H1 (cell line): ENCODE measurements at regions of chr7 and their contacts with region 1.

Region 1: DNA sequence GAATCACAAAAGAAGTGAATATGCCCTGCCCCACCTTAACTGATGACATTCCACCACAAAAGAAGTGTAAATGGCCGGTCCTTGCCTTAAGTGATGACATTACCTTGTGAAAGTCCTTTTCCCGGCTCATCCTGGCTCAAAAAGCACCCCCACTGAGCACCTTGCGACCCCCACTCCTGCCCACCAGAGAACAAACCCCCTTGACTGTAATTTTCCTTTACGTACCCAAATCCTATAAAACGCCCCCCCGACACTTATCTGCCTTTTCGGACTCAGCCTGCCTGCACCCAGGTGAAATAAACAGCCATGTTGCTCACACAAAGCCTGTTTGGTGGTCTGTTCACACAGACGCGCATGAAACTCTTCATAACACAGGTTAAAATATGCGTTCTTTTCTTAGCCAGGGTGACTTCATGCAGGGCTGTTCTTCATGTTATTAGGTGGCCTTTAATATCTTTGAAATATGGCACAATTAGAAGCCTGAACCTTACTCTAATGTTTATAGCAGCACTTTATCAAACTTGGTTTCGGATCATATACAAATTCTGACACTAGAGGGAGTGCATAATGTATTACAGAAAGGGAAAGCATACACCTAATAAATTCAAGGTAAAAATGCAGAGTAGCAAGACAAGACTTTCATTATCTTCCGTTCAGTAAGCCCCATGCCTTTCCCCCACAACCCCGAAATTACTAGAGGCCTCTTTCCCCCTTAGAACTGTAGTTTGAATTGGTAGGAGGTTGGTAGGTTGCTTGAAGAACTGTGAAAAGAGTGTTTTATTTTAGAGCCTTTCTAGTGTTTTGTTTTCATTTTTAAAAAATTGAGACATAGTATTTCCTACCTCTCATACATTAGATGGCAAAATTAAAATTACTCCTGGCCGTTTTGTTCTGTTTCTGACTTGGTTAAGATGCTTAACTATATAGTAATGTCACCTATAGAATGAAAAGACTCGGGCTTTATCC is 117.9 kb downstream of the NPY start:
- DNase-seq: no peak
- H3K4me3 ChIP-seq: peak overlapping the region; percentile 3 to 66 (median 56)
- H3K27ac ChIP-seq: no peak overlapping the region
- H3K4me1 ChIP-seq: peaks cover 2 to 28% (median 19%) of the 10 kb centered on the region in 4 experiments; a peak in 6 of 7 replicates
- H3K27me3 ChIP-seq: no peaks in the 10 kb centered on the region
- CTCF ChIP-seq: peak in 1 of 3 experiments; percentile 27; a peak in 1 of 4 replicates
- EP300 ChIP-seq: no peak
- POLR2A ChIP-seq: peak; percentile 16 to 38; a peak in 2 of 3 replicates
- RAD21 ChIP-seq: no peak; a peak in 1 of 4 replicates

Region 2: GRCh38 chr7:24135003-24135817 is 266.7 kb before region 1 on chr7:
- CTCF ChIA-PET with region 1: no interaction called
- POLR2A ChIA-PET with region 1: no interaction called
- DNase-seq: no peak
- H3K4me3 ChIP-seq: no peak overlapping the region
- H3K27ac ChIP-seq: no peak overlapping the region
- H3K4me1 ChIP-seq: no peaks in the 10 kb centered on the region
- H3K27me3 ChIP-seq: no peaks in the 10 kb centered on the region
- CTCF ChIP-seq: no peak
- EP300 ChIP-seq: no peak
- POLR2A ChIP-seq: no peak
- RAD21 ChIP-seq: no peak

Region 3: GRCh38 chr7:24290004-24290641 is 111.8 kb before region 1 on chr7:
- CTCF ChIA-PET with region 1: interaction called, 5 read pairs
- POLR2A ChIA-PET with region 1: interaction called, 12 read pairs
- DNase-seq: peak in 1 of 2 experiments; percentile 53
- H3K4me3 ChIP-seq: no peak overlapping the region
- H3K27ac ChIP-seq: no peak overlapping the region
- H3K4me1 ChIP-seq: peaks cover 0 to 4% (median 1%) of the 10 kb centered on the region in 4 experiments; a peak in 3 of 7 replicates
- H3K27me3 ChIP-seq: peaks cover under 1 to 9% (median 6%) of the 10 kb centered on the region in 4 experiments; a peak in 6 of 7 replicates
- CTCF ChIP-seq: peak; percentile 17 to 79 (median 62)
- EP300 ChIP-seq: no peak
- POLR2A ChIP-seq: no peak
- RAD21 ChIP-seq: peak; percentile 91 to 92

Region 4: DNA sequence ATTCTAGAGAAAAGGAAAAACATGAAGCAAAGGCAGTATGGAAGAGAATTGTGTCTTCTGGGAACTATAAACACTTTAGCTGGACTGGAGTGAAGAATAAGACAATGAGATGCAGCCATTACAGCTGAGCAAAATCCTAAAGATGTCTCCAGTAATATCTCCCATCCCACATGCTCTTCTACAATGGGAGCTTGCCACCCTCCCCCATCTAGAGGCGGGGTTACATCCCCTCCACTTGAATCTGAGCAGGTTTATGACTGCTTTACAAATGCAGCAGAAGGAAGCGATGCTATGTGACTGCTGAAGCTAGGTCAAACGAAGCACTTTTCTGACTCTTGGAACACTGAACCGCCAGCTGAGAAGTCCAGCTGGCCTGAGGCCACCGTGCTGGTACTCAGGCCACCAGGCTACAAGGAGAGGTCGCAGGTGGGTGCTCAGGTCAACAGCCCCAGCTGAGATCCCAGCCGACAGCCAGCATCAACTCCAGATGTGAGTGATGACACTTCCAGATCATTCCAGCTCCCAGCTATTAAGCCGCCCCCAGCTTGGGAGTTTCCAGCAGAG is 28.9 kb before region 1 on chr7:
- CTCF ChIA-PET with region 1: no interaction called
- POLR2A ChIA-PET with region 1: interaction called, 13 read pairs
- DNase-seq: no peak
- H3K4me3 ChIP-seq: no peak overlapping the region
- H3K27ac ChIP-seq: no peak overlapping the region
- H3K4me1 ChIP-seq: peaks cover 6 to 22% (median 10%) of the 10 kb centered on the region in 4 experiments
- H3K27me3 ChIP-seq: no peaks in the 10 kb centered on the region
- CTCF ChIP-seq: no peak
- EP300 ChIP-seq: no peak
- POLR2A ChIP-seq: no peak
- RAD21 ChIP-seq: no peak

Region 5: DNA sequence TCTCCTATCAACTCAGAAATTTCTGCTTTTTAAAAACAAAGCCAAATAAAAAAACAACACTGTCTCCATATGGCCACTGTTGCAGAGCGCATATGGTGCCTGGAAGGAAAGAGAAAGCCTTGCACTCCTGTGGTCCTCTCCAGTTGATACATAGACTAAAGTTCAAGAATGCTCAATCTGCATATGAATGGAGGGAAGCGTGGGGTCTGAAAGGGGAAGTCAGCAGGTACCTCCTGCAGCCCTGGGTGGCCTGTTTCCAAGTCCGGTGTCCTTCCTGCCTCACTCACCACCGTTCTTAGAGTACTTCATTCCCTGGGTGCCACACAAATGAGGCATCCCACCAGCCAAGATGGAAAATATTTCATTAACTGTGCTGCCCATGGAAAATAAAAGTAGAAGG is 33.1 kb after region 1 on chr7:
- CTCF ChIA-PET with region 1: no interaction called
- POLR2A ChIA-PET with region 1: interaction called, 20 read pairs
- DNase-seq: peak; percentile 62 to 82
- H3K4me3 ChIP-seq: peak overlapping the region in 1 of 4 experiments; percentile 25; a peak in 2 of 8 replicates
- H3K27ac ChIP-seq: no peak overlapping the region
- H3K4me1 ChIP-seq: peaks cover 5 to 42% (median 33%) of the 10 kb centered on the region in 4 experiments; a peak in 6 of 7 replicates
- H3K27me3 ChIP-seq: peaks cover 0 to 3% (median 0%) of the 10 kb centered on the region in 4 experiments; a peak in 1 of 7 replicates
- CTCF ChIP-seq: no peak
- EP300 ChIP-seq: peak in 1 of 2 experiments; percentile 58; a peak in 1 of 3 replicates
- POLR2A ChIP-seq: no peak
- RAD21 ChIP-seq: no peak

Region 6: GRCh38 chr7:24572997-24573625 is 171.2 kb after region 1 on chr7 and contains the start of gene PALS2:
- CTCF ChIA-PET with region 1: no interaction called
- POLR2A ChIA-PET with region 1: interaction called, 65 read pairs
- DNase-seq: peak in 1 of 2 experiments; percentile 87
- H3K4me3 ChIP-seq: peak within 1 kb of the TSS; percentile 82 to 93 (median 84)
- H3K27ac ChIP-seq: peak within 1 kb of the TSS; percentile 55; the same call in 1 of the 2 replicates
- H3K4me1 ChIP-seq: peaks cover 0 to 18% (median 4%) of the 10 kb centered on the region in 4 experiments; a peak in 5 of 7 replicates
- H3K27me3 ChIP-seq: peaks cover 0 to 4% (median 0%) of the 10 kb centered on the region in 4 experiments; a peak in 2 of 7 replicates
- CTCF ChIP-seq: no peak
- EP300 ChIP-seq: peak in 1 of 2 experiments; percentile 5; a peak in 1 of 3 replicates
- POLR2A ChIP-seq: no peak; a peak in 1 of 3 replicates
- RAD21 ChIP-seq: peak in 1 of 2 experiments; percentile 1; a peak in 1 of 4 replicates
- total RNA-seq, gene PALS2: 84.1 and 98.3 TPM in 2 replicates